Prostate gland (tissue), 2 donors: ENCODE measurements at regions of chr11 and their contacts with region 1.

Region 1: DNA sequence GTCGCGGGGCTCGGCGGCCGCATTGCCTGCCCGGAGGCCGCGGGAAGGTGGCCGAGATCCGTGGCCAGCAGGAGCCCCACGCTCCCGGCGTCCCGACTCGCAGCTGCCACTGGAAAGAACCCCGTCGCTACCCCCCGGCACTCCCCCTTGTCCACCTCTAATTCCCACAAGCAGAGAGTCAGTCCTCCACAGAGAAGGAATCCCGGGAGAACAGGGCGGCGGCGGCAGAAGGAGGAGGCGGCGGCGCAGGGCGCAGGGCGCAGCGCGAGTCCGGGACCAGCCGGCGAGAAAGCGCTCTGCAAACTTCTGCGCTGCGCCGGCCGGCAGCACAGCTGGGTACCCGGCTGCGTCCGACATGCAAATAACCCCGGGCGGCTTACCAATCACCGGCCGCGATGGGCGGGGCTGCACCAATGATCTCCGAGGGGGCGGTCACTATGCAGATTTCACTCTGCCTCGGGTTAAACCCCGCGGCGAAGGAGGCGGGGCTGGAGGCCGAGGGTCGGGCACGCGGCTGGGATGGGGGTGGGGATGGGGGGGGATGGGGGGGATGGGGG is at the start of gene ABTB2:
- DNase-seq: peak; percentile 99
- H3K4me3 ChIP-seq: peak within 1 kb of the TSS; percentile 41 to 53
- H3K27ac ChIP-seq: peak within 1 kb of the TSS; percentile 76 to 79
- H3K4me1 ChIP-seq: peaks cover 6% of the 10 kb centered on the region
- H3K27me3 ChIP-seq: no peaks in the 10 kb centered on the region
- CTCF ChIP-seq: peak in 1 of 4 experiments; percentile 18
- POLR2A ChIP-seq: peak; percentile 99
- total RNA-seq, gene ABTB2: 3.0 to 13.7 TPM

Region 2: GRCh38 chr11:33996498-33997454 is 361.0 kb before region 1 on chr11:
- intact Hi-C with region 1: loop called (anchors 2 kb)
- DNase-seq: peak; percentile 73
- H3K4me3 ChIP-seq: no peak overlapping the region
- H3K27ac ChIP-seq: no peak overlapping the region
- H3K4me1 ChIP-seq: no peaks in the 10 kb centered on the region
- H3K27me3 ChIP-seq: no peaks in the 10 kb centered on the region
- CTCF ChIP-seq: peak; percentile 54 to 90 (median 86)
- POLR2A ChIP-seq: no peak

Region 3: DNA sequence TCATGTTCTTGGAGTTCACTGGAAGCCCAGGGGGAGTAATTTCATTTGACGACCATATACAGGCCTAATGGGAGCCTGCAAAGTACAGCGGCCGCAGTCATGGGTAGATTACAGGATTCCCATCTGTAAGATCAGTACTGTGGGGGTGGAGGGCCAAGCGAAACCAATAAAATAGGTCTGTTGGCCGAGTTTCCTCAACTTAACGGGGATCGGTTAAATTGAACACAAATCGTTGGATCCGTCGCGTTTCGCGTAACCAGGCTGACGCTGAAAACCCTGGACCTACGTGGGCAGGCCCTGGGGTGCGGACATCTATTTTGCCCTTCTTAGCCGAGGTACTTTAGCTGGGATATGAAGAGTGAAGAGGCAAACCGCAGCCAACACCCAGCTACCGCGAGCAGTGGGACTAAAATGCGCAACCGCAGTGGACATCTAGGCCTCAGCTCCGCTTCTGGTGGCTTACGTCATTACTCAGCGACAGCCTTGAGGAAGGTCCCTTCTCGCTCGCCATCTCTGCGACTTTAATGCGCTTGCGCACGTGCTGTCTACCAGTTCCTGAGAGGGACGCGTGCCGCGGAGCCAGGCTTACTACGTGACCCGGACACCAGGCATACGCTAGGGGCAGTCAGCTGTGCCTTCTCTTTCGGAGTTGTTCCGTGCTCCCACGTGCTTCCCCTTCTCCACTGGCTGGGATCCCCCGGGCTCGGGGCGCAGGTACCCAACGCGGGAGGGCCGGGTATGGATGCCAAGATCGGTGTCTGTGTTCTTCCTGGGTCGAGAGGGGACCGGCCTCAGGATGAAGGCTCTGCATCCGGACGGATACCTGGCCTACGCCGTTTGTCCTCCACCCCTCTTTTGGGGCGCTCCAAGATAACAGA is 252.5 kb before region 1 on chr11 and contains the start of gene NAT10:
- intact Hi-C with region 1: loop called (anchors 5 kb)
- DNase-seq: peak; percentile 95
- H3K4me3 ChIP-seq: peak within 1 kb of the TSS; percentile 54 to 66
- H3K27ac ChIP-seq: peak within 1 kb of the TSS; percentile 91 to 94
- H3K4me1 ChIP-seq: peaks cover 4% of the 10 kb centered on the region
- H3K27me3 ChIP-seq: no peaks in the 10 kb centered on the region
- CTCF ChIP-seq: peak in 1 of 4 experiments; percentile 19
- POLR2A ChIP-seq: peak; percentile 72
- total RNA-seq, gene NAT10: 21.9 to 34.7 TPM

Region 4: GRCh38 chr11:34192481-34193401 is 165.0 kb before region 1 on chr11:
- intact Hi-C with region 1: loop called (anchors 1 kb)
- DNase-seq: peak; percentile 38
- H3K4me3 ChIP-seq: no peak overlapping the region
- H3K27ac ChIP-seq: peak overlapping the region in 1 of 2 donors; percentile 48
- H3K4me1 ChIP-seq: no peaks in the 10 kb centered on the region
- H3K27me3 ChIP-seq: no peaks in the 10 kb centered on the region
- CTCF ChIP-seq: no peak
- POLR2A ChIP-seq: no peak

Region 5: GRCh38 chr11:34427186-34427805 is 69.5 kb after region 1 on chr11:
- intact Hi-C with region 1: no loop called
- DNase-seq: no peak
- H3K4me3 ChIP-seq: no peak overlapping the region
- H3K27ac ChIP-seq: no peak overlapping the region
- H3K4me1 ChIP-seq: peaks cover 1% of the 10 kb centered on the region
- H3K27me3 ChIP-seq: no peaks in the 10 kb centered on the region
- CTCF ChIP-seq: no peak
- POLR2A ChIP-seq: no peak

Region 6: DNA sequence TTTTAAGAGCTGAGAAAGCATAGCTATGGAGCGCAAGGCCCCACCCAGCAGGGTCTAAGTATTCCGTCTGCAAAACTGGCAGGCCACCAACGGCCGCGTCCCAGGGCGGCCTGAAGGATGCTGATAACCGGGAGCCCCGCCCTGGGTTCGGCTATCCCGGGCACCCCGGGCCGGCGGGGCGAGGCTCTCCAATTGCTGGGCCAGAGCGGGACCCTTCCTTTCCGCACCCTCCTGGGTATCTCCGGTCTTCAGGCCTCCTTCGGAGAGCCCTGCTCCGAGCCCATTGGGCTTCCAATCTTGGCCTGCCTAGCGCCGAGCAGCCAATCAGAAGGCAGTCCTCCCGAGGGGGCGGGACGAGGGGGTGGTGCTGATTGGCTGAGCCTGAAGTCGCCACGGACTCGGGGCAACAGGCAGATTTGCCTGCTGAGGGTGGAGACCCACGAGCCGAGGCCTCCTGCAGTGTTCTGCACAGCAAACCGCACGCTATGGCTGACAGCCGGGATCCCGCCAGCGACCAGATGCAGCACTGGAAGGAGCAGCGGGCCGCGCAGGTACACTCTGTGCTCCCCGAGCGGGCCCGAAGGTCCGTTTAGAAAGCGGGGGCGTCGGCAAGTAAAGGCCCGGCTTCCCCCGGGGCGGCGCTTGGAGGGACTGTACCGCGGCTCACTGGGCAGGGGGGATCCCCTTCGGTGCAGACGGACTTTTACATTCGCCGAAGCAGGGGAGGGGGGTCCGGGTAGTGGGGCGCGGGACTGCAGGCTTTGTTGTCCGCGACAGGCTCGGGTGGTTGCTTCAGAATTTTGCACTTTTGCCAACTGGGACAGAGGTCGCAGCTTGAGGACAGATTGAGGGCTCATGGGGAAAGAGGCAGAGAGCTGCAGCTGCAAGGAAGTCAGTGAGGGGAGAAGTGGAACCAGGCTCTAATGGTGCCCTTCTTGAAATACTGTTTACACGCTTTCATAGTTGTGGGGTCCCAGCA is 81.0 kb after region 1 on chr11 and contains the start of gene CAT:
- intact Hi-C with region 1: loop called (anchors 5 kb)
- DNase-seq: peak; percentile 97
- H3K4me3 ChIP-seq: peak within 1 kb of the TSS; percentile 69 to 84
- H3K27ac ChIP-seq: peak within 1 kb of the TSS; percentile 79 to 82
- H3K4me1 ChIP-seq: no peaks in the 10 kb centered on the region
- H3K27me3 ChIP-seq: no peaks in the 10 kb centered on the region
- CTCF ChIP-seq: no peak
- POLR2A ChIP-seq: peak; percentile 70
- total RNA-seq, gene CAT: 67.3 to 167 TPM